GM23248 (cell line): ENCODE measurements at regions of chr2 and their contacts with region 1.

Region 1: DNA sequence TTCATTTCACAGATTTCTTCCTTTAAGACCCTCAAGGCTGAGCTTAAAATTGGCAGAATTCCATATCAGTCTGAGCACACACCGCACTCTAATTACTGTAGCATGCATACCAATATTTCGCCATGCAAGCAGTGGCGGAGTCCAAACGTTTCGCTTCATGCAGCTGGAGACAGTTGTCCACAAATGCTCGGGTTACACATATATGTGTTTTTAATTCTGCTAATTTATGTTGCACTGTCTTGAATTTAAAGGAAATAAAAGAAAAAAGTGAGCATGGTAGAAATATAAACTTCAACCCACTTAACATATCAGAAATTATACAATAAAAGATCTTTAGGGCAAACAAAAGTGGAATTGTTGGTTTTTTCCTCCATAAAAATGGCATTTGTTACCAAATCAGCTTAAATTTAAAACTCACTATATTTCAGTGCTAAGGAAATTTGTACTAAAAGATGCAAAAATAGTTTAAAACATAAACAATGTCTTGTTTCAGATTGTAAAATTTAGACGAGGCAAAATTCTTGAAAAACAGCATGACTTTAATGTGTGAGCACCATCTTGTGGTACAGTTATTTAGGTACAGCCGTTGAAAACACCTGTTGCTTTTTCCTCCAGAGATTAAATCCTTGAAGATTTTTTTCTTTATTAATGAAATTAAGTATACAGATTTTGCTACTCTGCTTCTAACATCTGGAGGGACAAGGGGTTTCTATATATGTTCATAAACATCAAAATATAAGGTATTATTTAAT is 24.1 kb upstream of the KANSL1L start:
- DNase-seq: peak; percentile 73
- H3K4me3 ChIP-seq: 0 out of 2 replicates have a peak overlapping the region, but pooled peaks have one; percentile 15
- H3K27ac ChIP-seq: no peak overlapping the region
- H3K4me1 ChIP-seq: peaks cover 6% of the 10 kb centered on the region; the same call in 1 of the 2 replicates
- H3K27me3 ChIP-seq: no peaks in the 10 kb centered on the region

Region 2: GRCh38 chr2:208392300-208393080 is 1802.8 kb before region 1 on chr2:
- in situ Hi-C with region 1: loop called (anchors 25 kb)
- DNase-seq: peak; percentile 34
- H3K4me3 ChIP-seq: no peak overlapping the region
- H3K27ac ChIP-seq: no peak overlapping the region
- H3K4me1 ChIP-seq: no peaks in the 10 kb centered on the region
- H3K27me3 ChIP-seq: peaks cover 4% of the 10 kb centered on the region

Region 3: DNA sequence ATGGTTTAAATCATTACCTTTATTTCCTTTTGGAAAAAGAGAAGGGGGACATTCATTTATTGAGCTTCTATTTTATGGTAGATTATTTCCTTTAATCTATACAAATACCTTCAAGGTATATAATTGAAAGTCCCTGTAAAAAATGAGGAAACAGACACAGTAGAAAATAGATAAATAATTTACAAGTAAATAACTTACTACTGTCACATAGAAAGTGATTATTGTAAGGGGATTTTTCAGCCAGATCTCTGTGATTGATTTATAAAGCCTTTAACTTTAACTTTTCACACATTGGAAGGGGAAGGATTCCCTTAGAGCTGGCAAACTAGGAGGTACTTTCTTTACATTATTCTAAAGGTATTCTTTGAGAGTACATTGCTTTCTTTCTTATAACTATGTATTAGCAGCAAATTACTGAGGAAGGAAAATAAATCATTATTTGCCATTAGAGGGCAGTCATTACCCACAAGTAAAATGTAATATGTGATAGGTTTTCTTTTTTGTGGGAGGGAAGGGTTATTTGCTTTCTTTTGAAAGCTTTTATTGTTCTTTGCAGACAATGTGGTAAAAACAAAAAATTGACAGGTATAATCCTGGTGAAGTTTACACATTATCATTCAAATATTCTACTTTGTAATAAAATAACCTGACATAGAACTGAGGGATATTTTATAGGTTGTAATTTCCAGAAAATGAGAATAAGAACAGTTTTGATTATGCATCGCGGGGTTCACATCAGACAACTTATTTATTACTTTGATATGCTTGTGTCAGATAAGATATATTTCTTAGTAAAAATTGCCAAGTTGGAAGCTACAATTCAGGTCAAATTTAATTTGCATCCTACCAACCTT is 217.7 kb before region 1 on chr2:
- in situ Hi-C with region 1: loop called (anchors 5 kb)
- DNase-seq: peak; percentile 58
- H3K4me3 ChIP-seq: no peak overlapping the region
- H3K27ac ChIP-seq: no peak overlapping the region
- H3K4me1 ChIP-seq: no peaks in the 10 kb centered on the region
- H3K27me3 ChIP-seq: no peaks in the 10 kb centered on the region

Region 4: GRCh38 chr2:210072922-210073509 is 122.3 kb before region 1 on chr2:
- in situ Hi-C with region 1: loop called (anchors 10 kb)
- DNase-seq: peak; percentile 73
- H3K4me3 ChIP-seq: peak overlapping the region; percentile 46; the same call in 1 of the 2 replicates
- H3K27ac ChIP-seq: no peak overlapping the region
- H3K4me1 ChIP-seq: no peaks in the 10 kb centered on the region
- H3K27me3 ChIP-seq: no peaks in the 10 kb centered on the region